Panc1 (cell line): ENCODE measurements at regions of chr4 and their contacts with region 1.

Region 1: GRCh38 chr4:36870121-36870520 is 374.4 kb upstream of the NWD2 start:
- DNase-seq: no peak
- ATAC-seq: no peak
- H3K4me3 ChIP-seq: no peak overlapping the region
- H3K27ac ChIP-seq: no peak overlapping the region
- H3K4me1 ChIP-seq: no peaks in the 10 kb centered on the region
- H3K27me3 ChIP-seq: no peaks in the 10 kb centered on the region
- CTCF ChIP-seq: no peak

Region 2: GRCh38 chr4:36884151-36884550 is 14.0 kb after region 1 on chr4:
- CTCF ChIA-PET with region 1: no interaction called
- POLR2A ChIA-PET with region 1: no interaction called
- in situ Hi-C with region 1: no loop called
- intact Hi-C with region 1: loop called (anchors 1 kb)
- DNase-seq: no peak
- ATAC-seq: no peak
- H3K4me3 ChIP-seq: no peak overlapping the region
- H3K27ac ChIP-seq: no peak overlapping the region
- H3K4me1 ChIP-seq: no peaks in the 10 kb centered on the region
- H3K27me3 ChIP-seq: no peaks in the 10 kb centered on the region
- CTCF ChIP-seq: no peak